ENCODE measurements at regions of chr11 and their contacts with region 1.

Region 1: DNA sequence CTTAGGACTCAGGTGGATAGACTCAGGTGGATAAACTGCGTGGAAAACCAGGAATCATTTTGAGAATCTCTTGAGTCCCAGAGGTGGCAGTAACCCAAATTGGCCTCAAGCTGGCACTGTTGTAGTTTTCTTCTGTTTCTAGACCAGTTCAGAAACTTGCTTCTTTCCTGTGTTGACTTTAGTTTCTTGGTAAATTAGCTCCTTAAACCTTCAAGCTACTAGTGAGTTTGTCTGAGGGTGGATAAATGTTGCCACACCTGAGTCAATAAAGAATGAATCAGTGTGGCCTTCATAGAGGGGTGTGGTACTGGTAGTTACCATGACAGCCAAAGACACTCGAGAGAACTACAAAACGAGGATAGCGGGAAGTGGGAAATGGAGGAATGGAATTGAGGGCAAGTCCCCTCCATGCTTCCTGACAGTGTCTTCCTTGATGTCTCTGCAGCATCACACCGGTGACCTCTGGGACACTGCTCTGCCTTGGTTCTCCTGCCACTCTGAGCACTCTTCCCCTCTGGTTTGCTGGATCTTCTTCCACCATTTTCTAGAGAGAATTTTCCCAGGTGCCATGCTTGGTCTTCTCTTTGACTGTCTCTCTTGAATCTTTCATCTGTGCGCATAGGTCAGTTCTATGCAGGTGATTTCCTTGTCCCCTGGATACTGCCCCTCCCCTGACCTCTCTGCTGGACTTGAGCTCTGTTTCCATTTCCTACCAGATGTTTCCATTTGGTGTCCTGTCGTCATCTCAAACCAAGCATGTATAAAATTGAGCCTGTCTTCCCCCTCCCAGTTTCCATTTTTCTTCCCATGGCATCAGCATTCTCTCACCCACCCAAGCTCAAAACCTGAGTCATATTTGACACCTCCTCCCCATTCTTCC is 7.2 kb downstream of the POLD4 start:
- DNase-seq: peak; percentile 10
- H3K4me3 ChIP-seq: no peak overlapping the region
- H3K27ac ChIP-seq: no peak overlapping the region
- H3K4me1 ChIP-seq: peaks cover 5 to 29% of the 10 kb centered on the region in 2 experiments; a peak in 1 of 4 replicates
- H3K27me3 ChIP-seq: no peaks in the 10 kb centered on the region
- CTCF ChIP-seq: peak; percentile 77
- EP300 ChIP-seq: no peak
- RAD21 ChIP-seq: peak; percentile 66

Region 2: DNA sequence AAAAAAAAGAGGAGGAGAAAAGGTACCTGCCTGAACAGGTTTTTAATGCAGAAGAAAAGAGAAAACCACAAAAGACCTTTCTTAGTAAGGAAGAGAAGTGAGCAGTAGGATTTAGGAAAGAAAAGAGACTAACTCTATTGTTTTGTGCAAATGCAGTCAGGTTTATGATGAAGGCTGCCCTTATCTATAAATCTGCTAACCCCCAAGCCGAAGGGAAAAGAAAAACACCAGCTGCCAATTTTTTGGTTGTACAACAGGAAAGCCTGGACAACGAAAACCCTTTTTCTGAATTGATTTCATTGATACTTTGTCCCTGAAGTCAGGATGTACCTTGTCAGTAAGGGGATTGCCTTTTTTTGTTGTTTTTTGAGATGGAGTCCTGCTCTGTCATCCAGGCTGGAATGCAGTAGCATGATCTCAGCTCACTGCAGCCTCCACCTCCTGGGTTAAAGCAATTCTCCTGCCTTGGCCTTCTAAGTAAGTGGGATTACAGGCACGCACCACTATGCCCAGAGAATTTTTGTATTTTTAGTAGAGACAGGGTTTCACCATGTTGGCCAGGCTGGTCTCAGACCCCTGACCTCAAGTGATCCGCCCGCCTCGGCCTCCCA is 14.0 kb before region 1 on chr11:
- CTCF ChIA-PET with region 1: interaction called, 66 read pairs
- POLR2A ChIA-PET with region 1: interaction called, 3 read pairs
- DNase-seq: no peak
- H3K4me3 ChIP-seq: no peak overlapping the region
- H3K27ac ChIP-seq: no peak overlapping the region
- H3K4me1 ChIP-seq: no peaks in the 10 kb centered on the region
- H3K27me3 ChIP-seq: no peaks in the 10 kb centered on the region
- CTCF ChIP-seq: no peak
- EP300 ChIP-seq: no peak
- RAD21 ChIP-seq: no peak

Region 3: DNA sequence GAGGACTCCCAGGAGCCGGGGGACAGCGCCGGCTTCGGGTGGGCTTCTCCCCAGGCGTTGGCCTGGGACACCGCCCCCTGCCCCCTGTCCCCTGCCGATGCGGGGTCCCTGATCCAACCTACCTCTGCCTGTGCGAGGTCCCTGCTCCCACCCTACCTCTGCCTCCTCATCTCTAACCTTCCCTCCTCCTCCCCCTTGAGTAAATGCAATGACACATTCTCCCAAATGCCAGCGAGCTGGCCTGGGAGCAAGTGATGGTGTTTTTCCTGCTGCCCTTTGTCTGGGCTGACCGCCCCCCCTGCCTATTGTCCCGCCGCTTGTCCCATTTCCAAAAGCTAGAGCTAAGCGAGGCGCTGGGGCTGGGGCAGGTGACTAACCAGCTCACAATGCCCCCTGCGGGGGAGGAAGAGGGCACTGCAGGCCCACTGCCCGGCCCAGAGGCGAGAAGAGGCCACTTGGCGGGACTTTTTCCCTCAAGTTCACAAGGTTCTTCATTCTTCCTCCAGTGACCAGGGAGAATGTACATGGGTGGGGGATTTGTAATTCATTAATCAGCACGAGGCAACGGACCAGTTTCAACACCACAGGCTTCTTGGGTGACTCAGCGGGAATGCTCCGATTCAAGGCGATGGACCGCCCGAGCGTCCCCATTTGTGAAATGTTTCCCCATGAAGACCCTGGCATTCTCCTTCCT is 27.9 kb after region 1 on chr11:
- CTCF ChIA-PET with region 1: interaction called, 955 read pairs
- POLR2A ChIA-PET with region 1: no interaction called
- DNase-seq: peak; percentile 69
- H3K4me3 ChIP-seq: peak overlapping the region; percentile 61 to 83
- H3K27ac ChIP-seq: peak overlapping the region; percentile 67 to 96
- H3K4me1 ChIP-seq: peaks cover 39 to 47% of the 10 kb centered on the region in 2 experiments; a peak in 3 of 4 replicates
- H3K27me3 ChIP-seq: no peaks in the 10 kb centered on the region
- CTCF ChIP-seq: peak; percentile 55
- EP300 ChIP-seq: peak in 1 of 2 experiments; percentile 79; a peak in 2 of 4 replicates
- RAD21 ChIP-seq: peak; percentile 17; the same call in 1 of the 2 replicates

Region 4: DNA sequence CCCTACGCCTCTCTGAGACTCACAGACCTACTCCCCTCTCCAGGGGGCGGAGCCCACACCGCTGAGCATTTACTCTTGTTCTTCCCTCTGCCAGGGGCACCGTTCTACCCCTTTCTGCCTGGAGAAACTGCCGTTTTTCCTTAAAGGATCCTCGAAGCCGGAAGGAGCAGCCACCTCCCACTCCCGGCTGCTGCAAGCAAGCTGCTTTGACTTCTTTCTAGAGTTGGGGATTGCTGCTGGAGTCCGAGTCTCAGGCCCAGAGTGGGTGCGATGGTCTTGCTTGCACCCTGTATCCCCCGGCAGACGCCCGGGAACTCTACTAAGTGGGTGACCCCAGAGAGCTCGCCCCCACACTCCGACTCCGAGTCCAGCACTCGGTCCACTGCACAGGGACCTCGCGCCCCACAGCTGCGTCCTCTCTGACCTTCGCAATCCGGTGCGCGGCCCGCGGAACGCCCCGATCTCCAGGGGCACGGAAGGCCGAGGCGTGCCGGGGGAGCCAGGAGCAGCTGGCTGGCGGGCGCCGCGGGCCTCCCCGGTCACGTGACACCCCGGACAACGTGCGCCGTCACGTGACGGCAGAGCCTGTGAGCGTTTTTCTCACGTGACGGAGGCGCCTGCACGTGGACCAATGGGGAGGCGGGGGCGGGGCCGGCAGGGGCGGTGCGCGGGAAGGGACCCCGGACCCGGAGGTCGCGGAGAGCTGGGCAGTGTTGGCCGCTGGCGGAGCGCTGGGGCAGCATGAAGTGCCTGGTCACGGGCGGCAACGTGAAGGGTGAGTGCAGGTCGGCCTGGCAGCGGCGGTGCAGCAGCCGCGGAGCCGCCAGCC is 45.4 kb after region 1 on chr11 and contains the start of gene RAD9A:
- CTCF ChIA-PET with region 1: interaction called, 955 read pairs
- POLR2A ChIA-PET with region 1: interaction called, 3 read pairs
- DNase-seq: peak; percentile 99
- H3K4me3 ChIP-seq: peak within 1 kb of the TSS; percentile 76 to 98
- H3K27ac ChIP-seq: peak within 1 kb of the TSS; percentile 80 to 82
- H3K4me1 ChIP-seq: peaks cover 0 to 13% of the 10 kb centered on the region in 2 experiments; a peak in 1 of 4 replicates
- H3K27me3 ChIP-seq: no peaks in the 10 kb centered on the region
- CTCF ChIP-seq: no peak
- EP300 ChIP-seq: peak in 1 of 2 experiments; percentile 8; a peak in 1 of 4 replicates
- RAD21 ChIP-seq: no peak
- polyA plus RNA-seq, gene RAD9A: 21.5 and 22.3 TPM in 2 replicates